AG04449 (cell line): ENCODE measurements at regions of chr2 and their contacts with region 1.

Region 1: DNA sequence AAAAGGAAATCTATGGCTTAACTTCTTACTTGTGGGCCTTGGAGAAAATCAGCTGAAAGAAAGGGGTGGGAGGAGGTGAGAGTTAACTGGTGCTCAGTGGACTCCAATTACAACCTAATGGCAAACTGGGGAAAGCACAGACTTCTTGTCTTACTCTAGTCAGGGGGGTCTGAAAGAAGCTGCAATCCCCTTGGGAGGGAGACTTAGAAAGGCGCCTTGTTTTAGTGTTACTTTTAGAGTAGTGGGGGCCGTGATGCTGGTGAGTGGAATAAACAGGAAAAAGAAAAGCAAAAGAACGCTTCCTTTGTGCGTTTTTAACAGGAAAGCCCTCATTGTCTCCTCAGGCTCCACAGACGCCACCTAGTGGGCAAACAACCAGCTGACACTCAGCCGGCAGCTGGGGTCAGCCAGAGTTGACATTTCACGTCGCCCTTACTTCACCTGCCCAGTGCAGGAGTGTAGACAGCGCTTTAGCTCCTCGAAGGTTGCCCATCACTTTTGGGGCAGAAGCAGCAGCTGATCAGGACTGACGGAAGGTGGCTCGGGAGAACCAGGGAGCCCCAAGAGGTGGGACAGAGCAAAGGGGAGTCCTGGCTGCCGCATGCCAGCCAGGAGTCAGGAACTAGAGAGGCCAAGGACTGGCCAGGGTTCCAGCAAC is 55.9 kb upstream of the GORASP2 start:
- DNase-seq: no peak
- H3K4me3 ChIP-seq: peak overlapping the region; percentile 31; the same call in 1 of the 2 replicates
- CTCF ChIP-seq: peak; percentile 88

Region 2: GRCh38 chr2:170332676-170333402 is 540.3 kb before region 1 on chr2:
- CTCF ChIA-PET with region 1: no interaction called
- POLR2A ChIA-PET with region 1: no interaction called
- DNase-seq: no peak
- H3K4me3 ChIP-seq: no peak overlapping the region
- CTCF ChIP-seq: no peak

Region 3: DNA sequence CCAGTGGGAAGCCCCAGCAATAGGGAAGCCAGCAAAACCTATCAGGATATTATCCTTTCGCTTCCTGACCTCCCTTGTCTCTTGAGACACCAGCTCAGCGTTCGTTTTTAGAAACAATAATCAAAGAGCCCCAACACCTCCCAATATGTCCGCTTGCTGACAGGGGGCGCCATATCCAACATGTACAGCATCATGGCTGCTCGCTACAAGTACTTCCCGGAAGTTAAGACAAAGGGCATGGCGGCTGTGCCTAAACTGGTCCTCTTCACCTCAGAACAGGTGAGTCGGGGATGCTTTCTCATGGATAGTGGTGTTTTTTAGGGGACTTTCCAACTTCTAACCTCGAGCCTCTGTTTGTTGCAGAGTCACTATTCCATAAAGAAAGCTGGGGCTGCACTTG is 27.8 kb before region 1 on chr2:
- CTCF ChIA-PET with region 1: interaction called, 13 read pairs
- POLR2A ChIA-PET with region 1: no interaction called
- DNase-seq: no peak
- H3K4me3 ChIP-seq: no peak overlapping the region
- CTCF ChIP-seq: no peak

Region 4: DNA sequence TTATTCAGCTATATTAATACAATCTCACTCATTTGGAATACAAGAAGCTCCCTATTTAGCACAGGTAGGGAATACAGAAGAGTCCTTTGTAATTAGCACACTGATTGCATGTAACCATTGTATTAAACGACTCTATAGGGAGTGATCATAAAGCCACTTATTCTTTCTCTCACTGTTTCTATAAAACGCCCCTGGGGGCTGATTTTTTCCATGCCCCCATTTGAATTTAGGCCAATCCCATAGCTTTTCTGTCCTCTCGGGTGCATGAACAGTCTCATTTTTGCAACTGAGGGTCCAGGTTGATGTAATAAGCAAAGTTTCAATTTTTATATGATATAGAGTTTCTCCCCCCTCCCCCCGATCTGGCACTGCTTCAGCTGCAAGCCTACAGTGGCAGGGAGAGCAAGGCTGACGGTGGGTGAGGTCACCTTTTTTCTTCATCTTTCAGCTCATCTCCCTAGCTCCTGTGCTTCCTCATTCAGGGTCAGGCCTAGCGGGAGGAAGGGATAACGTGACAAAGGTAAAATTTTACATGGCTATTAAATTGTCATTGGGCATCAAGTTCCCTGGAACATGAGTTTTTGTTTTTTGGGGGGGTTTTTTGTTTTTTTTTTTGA is 10.8 kb before region 1 on chr2:
- CTCF ChIA-PET with region 1: interaction called, 16 read pairs
- POLR2A ChIA-PET with region 1: no interaction called
- DNase-seq: no peak
- H3K4me3 ChIP-seq: no peak overlapping the region
- CTCF ChIP-seq: no peak

Region 5: GRCh38 chr2:170886386-170886785 is 13.2 kb after region 1 on chr2:
- CTCF ChIA-PET with region 1: interaction called, 31 read pairs
- POLR2A ChIA-PET with region 1: no interaction called
- DNase-seq: peak; percentile 61
- H3K4me3 ChIP-seq: no peak overlapping the region
- CTCF ChIP-seq: no peak